ENCODE measurements at regions of chr6 and their contacts with region 1.

Region 1: DNA sequence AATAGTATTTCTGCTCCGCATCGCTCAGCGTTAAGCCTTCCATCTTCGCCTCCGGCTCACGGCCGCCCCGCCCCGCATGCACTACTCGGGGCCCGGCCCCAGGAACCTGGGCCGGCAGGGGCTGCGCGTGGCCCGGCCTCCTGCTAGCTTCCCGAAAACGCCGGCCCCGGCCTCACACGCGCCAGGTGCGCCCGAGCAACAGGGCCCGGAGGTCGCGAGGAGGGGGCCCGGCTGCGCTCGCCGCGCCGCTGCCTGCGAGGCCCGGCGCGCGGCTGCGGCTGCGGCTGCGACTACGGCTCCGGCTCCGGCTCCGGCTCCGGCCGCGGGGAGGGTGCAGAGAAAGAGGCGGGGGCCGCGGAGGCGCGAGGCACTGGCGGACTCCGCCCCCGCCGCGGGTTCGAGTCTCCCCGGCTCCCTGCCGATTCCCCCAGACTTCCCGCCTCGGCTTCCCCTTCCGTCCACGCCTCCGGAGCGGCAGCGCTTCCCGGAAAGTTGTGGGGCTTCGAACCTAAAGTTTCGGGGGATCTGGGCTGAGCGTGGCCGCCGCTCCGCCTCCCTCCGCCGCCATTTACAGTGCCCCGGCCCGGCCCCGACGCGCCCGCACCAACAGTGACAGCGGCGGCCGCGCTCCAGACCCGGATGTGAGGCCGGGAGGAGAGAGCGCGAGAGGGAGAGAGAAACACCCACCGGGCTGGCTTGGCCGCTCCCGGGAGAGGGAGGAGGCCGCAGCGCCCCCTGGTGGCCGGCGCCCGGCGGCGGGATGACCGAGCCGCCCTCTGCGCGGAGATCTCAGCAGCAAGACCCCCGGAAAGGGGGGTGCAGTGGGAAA is at the start of gene REPS1:
- DNase-seq: peak; percentile 89 to 94
- H3K4me3 ChIP-seq: peak within 1 kb of the TSS; percentile 66 to 82 (median 68)
- H3K27ac ChIP-seq: peak within 1 kb of the TSS; percentile 71 to 91 (median 77)
- H3K4me1 ChIP-seq: peaks cover 9 to 17% of the 10 kb centered on the region in 2 donors
- H3K27me3 ChIP-seq: no peaks in the 10 kb centered on the region
- CTCF ChIP-seq: peak; percentile 72 to 99 (median 94)
- POLR2A ChIP-seq: peak in 1 of 2 donors; percentile 87
- total RNA-seq, gene REPS1: 51.5 to 93.9 (median 66.1) TPM

Region 2: DNA sequence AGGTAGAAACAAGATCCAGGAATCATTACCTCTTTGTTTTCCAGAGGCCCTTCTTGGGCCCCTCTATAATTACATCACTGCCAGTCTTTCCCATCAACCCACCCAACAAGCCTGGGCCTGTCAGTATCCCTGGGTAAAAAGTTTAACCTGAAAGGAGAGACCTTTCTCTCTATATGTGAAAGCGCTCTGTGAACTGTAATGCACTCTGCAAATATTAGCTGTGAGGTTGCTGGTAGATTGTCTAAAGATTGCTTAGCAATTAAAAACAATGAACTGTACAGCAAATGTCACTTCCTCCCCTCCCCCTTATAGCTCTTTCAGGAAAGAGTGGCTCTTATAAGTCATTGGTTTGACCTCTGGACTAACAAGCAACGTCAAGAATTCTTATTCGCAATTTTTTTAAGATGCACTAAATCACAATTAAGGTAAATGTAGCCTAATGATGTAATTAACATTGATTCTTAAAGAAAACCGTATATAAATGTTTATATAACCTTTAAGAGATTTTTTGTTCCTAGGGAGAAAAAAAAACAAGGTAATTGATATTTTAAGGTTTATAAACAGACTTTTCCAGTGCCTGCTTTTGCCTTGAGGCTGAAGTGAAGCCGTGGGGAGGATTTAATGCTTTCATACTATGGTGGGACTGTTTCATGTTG is 173.5 kb before region 1 on chr6:
- intact Hi-C with region 1: loop called (anchors 5 kb)
- DNase-seq: no peak
- H3K4me3 ChIP-seq: no peak overlapping the region
- H3K27ac ChIP-seq: no peak overlapping the region
- H3K4me1 ChIP-seq: peaks cover 16 to 19% of the 10 kb centered on the region in 2 donors
- H3K27me3 ChIP-seq: no peaks in the 10 kb centered on the region
- CTCF ChIP-seq: no peak
- POLR2A ChIP-seq: no peak